Activated CD8-positive, alpha-beta T cell treated with anti-CD3 and anti-CD28 coated beads, Interleukin-2, amount 10 ng/mL, durations not matched to agents 7 days and 5 days (primary cell): ENCODE measurements at regions of chr17 and their contacts with region 1.

Region 1: DNA sequence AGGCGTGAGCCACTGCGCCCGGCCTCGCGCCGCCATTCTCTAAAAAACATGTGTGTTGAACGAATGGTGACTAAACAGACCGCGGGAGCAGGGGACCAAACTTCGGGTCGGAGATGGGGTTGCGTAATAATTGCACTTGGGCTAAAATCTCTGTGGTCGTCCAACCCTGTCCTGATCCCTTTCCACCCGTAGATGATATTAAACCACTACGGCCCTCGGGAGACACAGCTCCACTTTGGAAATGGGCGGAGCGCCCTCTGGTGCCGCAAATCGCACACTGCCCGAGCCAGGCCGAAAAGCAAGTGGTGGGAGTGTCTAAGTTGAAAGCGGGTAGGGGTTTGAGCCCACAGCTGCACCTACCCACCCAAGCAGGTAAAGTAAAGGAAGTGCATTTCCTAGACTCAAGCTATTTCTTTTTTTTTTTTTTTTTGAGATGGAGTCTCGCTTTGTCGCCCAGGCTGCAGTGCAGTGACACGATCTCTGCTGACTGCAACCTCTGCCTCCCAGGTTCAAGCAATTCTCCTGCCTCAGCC is 17.0 kb downstream of the CAVIN1 start:
- DNase-seq: peak; percentile 85
- ATAC-seq: peak; percentile 77
- H3K4me3 Mint-ChIP-seq: no peak overlapping the region
- H3K27ac Mint-ChIP-seq: no peak overlapping the region
- H3K4me1 Mint-ChIP-seq: peaks cover 21% of the 10 kb centered on the region
- H3K27me3 Mint-ChIP-seq: no peaks in the 10 kb centered on the region

Region 2: DNA sequence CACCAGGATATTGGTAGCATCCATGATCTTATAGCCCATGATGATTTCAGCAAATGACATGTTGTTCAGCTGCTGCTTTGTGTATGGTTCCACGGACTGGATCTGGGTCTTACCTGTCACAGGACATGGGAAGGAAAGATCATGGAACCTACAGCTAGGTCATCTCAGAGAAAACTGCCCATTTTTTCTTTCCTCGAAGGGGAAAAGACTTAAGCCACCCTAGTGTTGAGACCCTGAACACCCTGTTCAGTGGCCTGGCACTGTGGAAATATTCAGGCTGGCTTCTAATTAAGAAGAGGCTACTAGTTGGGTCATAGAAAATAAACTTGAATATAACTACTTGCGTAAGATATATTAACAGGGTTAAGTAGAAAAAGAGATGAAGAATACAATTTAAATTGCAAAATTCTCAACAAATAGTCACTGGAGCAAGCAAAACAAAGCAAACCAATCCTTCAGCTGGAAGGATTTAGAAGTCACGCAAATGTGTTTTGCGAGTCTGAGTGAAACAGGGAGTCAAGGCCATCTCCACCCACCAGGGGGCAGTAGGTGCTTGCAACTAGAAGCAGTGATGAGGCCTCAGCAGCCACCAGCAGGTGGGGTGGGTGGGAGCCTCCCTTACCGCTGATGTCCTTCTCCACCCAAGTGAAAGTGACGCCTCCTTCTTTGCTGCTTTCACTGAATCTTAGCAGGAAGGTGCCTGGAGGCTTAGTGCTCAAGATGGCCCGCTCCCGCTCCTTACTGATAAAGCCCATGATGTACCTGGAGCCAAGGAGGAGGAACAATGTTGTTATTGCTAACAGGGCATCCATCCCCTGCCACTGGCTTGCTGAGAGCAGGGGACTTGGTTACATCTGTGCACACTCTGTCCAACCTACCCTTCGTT is 83.4 kb before region 1 on chr17:
- CTCF ChIA-PET with region 1: interaction called, 666 read pairs
- POLR2A ChIA-PET with region 1: interaction called, 6 read pairs
- DNase-seq: peak; percentile 98
- ATAC-seq: peak; percentile 93
- H3K4me3 Mint-ChIP-seq: no peak overlapping the region
- H3K27ac Mint-ChIP-seq: peak overlapping the region; percentile 75
- H3K4me1 Mint-ChIP-seq: peaks cover 45% of the 10 kb centered on the region
- H3K27me3 Mint-ChIP-seq: no peaks in the 10 kb centered on the region

Region 3: DNA sequence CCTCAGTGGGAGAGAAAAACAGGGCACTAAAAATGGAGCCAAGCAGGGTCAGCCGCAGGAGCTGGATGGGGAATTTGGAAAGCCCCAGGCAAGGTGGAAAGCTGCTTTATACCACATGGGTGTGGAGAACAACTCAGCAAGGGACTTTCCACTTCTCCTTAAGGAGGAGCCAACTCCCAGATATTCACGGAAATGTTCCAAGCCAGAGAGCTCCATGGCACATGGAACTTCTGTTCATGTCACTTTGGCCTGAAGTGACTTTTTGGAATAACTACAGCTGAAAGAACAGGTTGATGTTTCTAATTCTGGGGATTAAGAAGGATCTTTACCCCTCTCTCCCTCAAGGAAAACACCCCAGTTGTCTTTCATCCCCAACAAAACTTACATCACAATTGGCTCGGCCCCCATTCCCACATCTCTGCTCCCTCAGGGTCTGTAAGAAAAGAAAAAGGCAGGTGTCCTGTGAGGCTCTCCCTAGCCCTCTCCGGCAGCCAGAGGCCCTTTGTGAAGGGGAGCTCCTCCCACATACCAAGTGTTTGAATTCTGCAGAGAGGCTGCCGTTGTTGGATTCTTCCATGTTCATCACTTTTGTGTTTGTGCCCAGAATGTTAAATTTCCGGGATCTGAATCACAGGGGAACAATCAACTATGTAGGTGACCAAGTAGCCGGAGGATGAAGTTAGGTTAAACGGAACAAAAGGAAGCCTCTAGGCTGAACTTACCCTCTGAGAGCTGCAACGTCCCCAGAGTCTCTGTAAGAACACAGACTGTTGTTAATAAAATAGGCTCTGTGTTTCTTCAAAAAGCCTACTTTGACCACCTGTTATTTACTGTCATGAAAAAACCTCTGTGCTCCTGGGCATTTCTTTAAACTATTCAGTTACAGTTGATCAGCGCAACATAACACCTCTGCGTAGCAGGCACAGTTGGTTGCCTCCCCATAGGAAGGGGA is 76.7 kb before region 1 on chr17:
- CTCF ChIA-PET with region 1: interaction called, 666 read pairs
- POLR2A ChIA-PET with region 1: interaction called, 5 read pairs
- DNase-seq: no peak
- ATAC-seq: no peak
- H3K4me3 Mint-ChIP-seq: no peak overlapping the region
- H3K27ac Mint-ChIP-seq: no peak overlapping the region
- H3K4me1 Mint-ChIP-seq: peaks cover 8% of the 10 kb centered on the region
- H3K27me3 Mint-ChIP-seq: no peaks in the 10 kb centered on the region

Region 4: DNA sequence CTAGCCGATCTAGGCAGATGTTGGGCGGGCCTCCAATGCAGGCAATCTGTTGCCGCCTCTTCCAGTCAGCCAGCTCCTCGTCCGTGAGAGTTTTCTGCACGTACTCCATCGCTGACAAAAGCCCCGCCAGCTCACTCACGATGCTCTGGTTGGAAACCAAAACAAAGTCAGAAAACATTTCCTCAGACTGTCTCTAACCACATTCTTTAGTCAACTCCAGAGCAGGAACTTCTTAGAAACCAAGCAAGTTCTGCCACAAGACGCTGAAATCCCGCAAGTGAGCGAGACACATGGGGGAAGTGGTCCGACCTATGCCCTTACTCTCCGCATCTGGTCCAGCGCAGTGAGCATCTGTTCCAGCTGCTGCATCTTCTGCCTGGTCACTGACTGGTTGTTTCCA is 68.6 kb before region 1 on chr17:
- CTCF ChIA-PET with region 1: interaction called, 33 read pairs
- POLR2A ChIA-PET with region 1: interaction called, 5 read pairs
- DNase-seq: peak; percentile 87
- ATAC-seq: peak; percentile 83
- H3K4me3 Mint-ChIP-seq: peak overlapping the region; percentile 51
- H3K27ac Mint-ChIP-seq: peak overlapping the region; percentile 81
- H3K4me1 Mint-ChIP-seq: peaks cover 67% of the 10 kb centered on the region
- H3K27me3 Mint-ChIP-seq: no peaks in the 10 kb centered on the region

Region 5: GRCh38 chr17:42388381-42389134 is 17.5 kb before region 1 on chr17 and contains the start of gene STAT3:
- CTCF ChIA-PET with region 1: interaction called, 74 read pairs
- POLR2A ChIA-PET with region 1: interaction called, 3 read pairs
- DNase-seq: peak; percentile 100
- ATAC-seq: peak; percentile 94
- H3K4me3 Mint-ChIP-seq: peak within 1 kb of the TSS; percentile 89
- H3K27ac Mint-ChIP-seq: peak within 1 kb of the TSS; percentile 99
- H3K4me1 Mint-ChIP-seq: peaks cover 51% of the 10 kb centered on the region
- H3K27me3 Mint-ChIP-seq: no peaks in the 10 kb centered on the region
- total RNA-seq, gene STAT3: 94.7 to 101 TPM

Region 6: DNA sequence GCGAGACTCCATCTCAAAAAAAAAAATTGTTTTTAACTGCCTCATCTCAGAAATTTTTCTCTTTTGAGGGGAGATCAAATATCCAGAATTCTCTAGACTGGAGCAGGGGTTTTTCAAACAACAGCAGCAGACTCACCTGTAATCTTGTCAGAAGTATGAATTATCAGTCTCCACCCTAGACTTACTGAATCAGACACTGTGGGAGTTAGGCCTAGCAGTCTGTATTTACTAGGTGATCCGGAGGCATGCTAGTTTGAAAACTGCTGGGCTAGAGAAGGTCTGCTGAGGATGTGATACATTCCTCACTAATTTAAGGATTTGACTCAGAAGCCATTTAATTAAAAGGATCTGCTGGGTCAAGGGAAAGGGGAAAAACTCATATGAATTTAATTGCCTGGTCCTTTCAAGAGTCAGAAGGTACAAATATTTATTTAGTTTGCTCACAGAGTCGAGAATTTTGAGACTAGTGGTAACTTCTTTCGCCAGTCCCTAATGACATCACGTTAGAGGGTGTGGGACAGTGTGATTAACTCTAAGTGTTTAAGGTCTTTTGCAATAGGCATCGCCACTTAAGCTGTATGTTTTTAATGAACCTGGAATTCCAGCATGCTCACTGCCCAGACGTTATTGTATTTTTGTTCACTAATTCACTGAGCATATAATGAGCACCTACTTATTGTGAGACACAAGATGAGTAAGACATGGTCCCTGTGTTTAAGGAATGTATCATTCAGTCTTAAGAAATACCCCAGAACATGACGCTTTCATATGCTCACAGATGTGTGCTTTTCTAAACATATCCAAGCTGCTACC is 66.9 kb after region 1 on chr17:
- CTCF ChIA-PET with region 1: no interaction called
- POLR2A ChIA-PET with region 1: no interaction called
- DNase-seq: no peak
- ATAC-seq: no peak
- H3K4me3 Mint-ChIP-seq: no peak overlapping the region
- H3K27ac Mint-ChIP-seq: no peak overlapping the region
- H3K4me1 Mint-ChIP-seq: peaks cover 16% of the 10 kb centered on the region
- H3K27me3 Mint-ChIP-seq: peaks cover 3% of the 10 kb centered on the region

Region 7: DNA sequence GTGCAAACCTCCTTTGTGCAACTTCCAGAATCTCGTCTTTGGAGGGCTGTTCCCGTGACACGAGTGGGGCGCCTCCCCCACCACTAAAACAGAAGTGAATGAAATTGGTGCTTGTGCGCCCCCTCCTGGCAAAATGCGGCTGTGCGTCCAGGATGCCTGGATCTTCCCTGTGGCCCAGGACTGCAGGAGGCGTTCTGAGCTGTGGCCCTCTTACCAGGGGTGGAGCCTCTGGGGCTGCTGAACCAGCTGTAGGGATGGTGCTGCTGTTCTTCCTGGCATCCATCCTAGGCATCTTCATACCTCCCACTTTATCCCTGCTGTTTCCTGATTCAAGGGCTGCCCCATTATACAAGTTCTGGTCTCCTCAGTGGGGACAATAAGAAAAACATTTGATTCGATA is 111.5 kb after region 1 on chr17:
- CTCF ChIA-PET with region 1: interaction called, 35 read pairs
- POLR2A ChIA-PET with region 1: no interaction called
- DNase-seq: peak; percentile 87
- ATAC-seq: peak; percentile 86
- H3K4me3 Mint-ChIP-seq: no peak overlapping the region
- H3K27ac Mint-ChIP-seq: no peak overlapping the region
- H3K4me1 Mint-ChIP-seq: peaks cover 5% of the 10 kb centered on the region
- H3K27me3 Mint-ChIP-seq: peaks cover 8% of the 10 kb centered on the region

Region 8: DNA sequence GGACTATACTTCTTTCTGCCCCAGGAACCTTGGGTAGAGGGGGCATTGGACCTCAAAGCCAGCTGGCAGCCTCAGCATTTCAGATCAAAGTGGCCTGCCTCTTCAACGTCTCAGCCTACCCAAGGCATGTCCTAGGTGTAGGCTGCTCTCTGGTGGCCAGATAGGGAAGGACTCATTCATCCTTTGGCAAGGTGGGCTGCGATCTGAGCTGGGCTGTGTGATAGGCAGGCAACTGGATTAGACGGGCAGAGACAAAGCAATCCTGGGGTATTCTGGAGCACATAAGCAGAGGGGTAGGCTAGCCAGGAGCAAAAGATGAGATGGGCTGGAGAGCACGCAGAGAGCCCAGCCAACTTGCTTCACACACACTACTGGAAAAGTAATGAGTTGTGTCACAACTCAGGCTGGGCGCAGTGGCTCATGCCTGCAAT is 121.3 kb after region 1 on chr17:
- CTCF ChIA-PET with region 1: interaction called, 19 read pairs
- POLR2A ChIA-PET with region 1: no interaction called
- DNase-seq: peak; percentile 86
- ATAC-seq: peak; percentile 74
- H3K4me3 Mint-ChIP-seq: no peak overlapping the region
- H3K27ac Mint-ChIP-seq: no peak overlapping the region
- H3K4me1 Mint-ChIP-seq: peaks cover 44% of the 10 kb centered on the region
- H3K27me3 Mint-ChIP-seq: no peaks in the 10 kb centered on the region